Vagina (tissue), 2 donors: ENCODE measurements at regions of chr4 and their contacts with region 1.

Region 1: DNA sequence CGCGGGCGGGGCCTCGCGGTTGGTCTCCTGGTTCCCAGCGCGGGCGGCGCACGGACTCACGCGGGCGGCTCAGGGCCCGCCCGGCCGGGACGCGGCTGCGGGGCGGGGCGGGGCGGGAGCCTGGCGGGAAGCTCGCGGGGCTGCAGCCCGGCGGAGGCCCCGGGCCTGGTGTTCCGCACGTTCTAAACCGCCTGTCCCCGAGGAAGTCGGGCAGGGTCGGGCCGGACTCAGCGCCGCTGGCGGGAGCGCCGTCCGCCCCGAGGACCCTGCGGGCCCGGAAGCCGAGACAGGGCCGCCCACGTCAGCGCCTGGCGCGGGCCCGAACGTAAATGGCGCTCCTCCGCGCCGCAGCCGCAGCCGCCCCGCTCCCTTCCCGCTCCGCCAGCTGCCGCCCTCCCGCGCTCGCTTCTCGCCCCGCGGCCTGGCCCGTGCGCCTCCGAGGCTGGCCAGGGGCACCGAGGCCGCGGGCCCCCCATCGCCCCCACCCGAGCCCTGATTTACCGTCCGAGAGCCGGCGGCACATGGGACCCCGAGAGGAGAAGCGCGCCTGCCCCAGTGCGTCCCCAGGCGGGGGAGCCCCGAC is 309 bp upstream of the CTBP1 start:
- DNase-seq: peak in 1 of 2 donors; percentile 80
- H3K4me3 ChIP-seq: peak overlapping the region; percentile 57 to 92
- H3K27ac ChIP-seq: peak overlapping the region; percentile 93
- H3K4me1 ChIP-seq: peaks cover 67% of the 10 kb centered on the region
- H3K27me3 ChIP-seq: no peaks in the 10 kb centered on the region
- CTCF ChIP-seq: no peak
- POLR2A ChIP-seq: peak in 1 of 2 donors; percentile 44

Region 2: DNA sequence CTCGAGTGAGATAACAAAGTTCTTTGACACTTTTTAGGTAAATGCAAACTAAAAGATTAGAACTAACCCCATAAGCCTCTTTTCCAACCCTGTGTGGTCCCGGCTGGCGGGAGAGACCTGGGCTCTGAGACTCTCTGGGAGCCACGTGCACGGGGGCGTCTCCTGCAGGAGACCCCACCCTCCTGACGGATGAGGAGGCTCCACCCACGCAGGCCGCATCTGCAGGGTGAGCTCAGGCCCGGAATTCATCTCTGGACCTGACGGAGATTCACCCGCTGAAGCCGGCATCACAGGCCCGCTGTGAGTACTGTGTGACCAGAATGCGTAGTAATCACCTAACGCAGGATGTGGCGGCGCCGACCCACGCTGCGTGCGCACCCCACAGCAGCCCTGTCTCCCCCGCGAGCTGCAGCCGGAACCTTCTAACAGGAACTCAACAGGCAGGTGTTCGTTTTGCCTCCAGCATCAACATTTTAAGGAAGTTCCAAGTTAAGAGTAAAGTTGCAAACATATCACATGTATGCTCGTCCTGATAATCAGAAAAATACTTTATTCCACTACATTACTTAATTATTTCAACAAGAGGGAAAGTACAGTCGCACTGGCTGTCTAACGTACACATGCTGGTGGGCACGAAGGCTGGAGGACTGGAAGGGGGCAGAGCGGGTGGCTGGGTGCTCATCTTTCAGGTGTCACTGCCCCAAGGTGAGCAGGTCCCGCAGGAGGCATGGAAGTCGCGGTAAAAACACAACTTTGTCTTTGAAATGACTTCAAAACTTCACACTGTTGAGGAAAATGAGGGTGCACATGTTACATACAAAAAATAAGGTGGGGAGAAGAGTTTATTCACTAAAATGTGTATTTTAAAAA is 193.3 kb before region 1 on chr4:
- intact Hi-C with region 1: no loop called
- DNase-seq: no peak
- H3K4me3 ChIP-seq: no peak overlapping the region
- H3K27ac ChIP-seq: no peak overlapping the region
- H3K4me1 ChIP-seq: peaks cover 5% of the 10 kb centered on the region
- H3K27me3 ChIP-seq: no peaks in the 10 kb centered on the region
- CTCF ChIP-seq: no peak
- POLR2A ChIP-seq: no peak

Region 3: DNA sequence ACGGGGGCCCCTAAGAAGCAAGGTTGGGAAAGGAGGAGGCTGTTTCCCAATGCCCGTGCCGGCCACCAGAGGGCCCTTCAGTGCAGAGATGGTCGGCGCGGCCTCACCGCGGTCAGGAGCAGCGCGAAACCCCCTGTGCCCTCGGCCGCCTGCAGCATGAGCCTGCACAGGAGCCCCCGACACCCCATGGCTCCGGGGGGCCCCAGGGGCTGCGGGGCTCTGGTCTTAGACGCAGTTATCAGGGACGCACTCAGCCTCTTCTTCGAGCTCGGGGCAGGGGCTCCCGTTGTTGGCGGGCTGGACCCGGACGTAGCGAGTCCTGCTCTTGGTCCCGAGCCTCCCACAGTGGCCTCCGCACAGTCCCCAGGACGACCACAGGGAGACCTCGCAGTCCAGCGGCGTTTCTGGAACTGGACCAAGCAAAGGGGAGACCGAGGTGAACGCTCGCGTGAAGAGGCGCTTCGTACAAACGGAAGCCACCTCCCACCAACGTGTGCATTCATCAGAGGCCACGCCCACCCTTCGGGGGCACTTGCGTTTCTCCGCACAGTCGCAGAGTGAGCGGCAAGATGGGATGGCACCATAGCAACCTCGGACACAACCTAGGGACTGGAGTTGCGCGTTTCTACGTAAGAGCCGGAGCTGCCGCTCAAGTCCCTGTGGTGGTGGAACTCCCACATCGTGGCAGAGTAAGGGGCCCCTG is 81.8 kb before region 1 on chr4:
- intact Hi-C with region 1: loop called (anchors 5 kb)
- DNase-seq: peak in 1 of 2 donors; percentile 90
- H3K4me3 ChIP-seq: peak overlapping the region; percentile 47 to 55
- H3K27ac ChIP-seq: peak overlapping the region; percentile 82
- H3K4me1 ChIP-seq: peaks cover 53% of the 10 kb centered on the region
- H3K27me3 ChIP-seq: no peaks in the 10 kb centered on the region
- CTCF ChIP-seq: peak; percentile 79 to 90 (median 89)
- POLR2A ChIP-seq: no peak

Region 4: DNA sequence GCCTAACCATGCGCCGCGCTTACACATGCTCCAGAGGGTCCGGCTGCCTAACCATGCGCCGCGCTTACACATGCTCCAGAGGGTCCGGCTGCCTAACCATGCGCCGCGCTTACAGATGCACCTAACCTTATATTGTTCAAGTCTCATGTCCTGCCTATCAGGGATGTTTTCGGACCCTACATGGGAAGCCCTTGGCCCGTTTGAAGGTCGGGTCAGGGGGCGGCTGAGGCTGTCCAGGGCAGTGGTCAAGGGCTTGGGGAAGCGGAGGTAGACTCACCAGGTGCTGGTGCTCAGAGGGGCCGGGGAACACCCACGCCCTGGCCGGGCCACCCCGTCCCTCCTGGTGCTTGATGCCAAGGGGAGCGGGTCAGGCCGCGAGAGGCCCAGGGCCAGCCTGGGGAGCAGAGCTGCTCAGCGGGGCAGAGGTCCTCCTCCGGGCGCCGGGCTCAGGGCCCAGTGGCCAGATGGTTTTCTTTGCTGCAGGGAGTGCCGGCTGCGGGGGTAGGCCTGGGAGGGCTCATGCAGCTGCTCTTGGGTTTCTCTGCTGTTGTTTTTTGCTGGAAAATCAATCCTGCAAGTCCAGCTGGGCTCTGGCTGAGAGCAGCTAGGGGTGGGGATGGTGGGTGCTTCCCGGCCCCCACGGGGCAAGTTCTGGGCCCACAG is 41.5 kb before region 1 on chr4:
- intact Hi-C with region 1: loop called (anchors 5 kb)
- DNase-seq: no peak
- H3K4me3 ChIP-seq: peak overlapping the region in 1 of 2 donors; percentile 27
- H3K27ac ChIP-seq: peak overlapping the region; percentile 83
- H3K4me1 ChIP-seq: peaks cover 99% of the 10 kb centered on the region
- H3K27me3 ChIP-seq: no peaks in the 10 kb centered on the region
- CTCF ChIP-seq: no peak
- POLR2A ChIP-seq: no peak

Region 5: DNA sequence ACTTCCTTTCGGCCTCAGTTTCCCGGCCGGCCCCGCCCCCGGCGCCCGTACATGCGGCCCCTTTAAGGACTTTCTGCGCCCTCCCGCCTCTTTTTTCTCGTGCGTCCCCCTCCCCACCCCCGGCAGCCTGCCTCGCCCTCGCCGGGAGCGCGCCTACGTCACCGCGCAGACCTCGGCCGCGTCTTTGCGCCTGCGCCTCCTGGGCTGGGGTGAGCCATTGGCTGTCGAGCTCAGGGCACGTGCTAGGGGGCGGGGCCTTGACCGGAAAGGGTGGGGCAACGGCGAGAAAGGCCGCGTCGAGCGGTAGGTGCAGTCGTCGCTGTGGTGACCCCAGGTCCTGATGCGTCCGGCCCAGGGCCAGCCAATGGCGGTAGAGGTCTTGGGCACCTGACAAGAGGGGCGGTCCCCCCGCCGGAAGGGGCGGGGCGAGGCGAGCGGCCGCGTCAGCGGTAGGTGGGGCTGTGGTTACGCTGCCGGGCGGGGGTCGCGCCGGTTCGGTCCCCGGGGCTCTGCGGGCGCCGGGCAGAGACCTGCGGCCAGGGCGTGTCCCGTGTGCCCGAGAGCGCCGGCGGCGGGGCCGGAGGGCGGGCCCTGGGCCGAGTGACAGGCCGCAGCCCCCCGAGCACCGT is 97.7 kb after region 1 on chr4 and contains the start of gene UVSSA:
- intact Hi-C with region 1: loop called (anchors 1 kb)
- DNase-seq: peak; percentile 100
- H3K4me3 ChIP-seq: peak within 1 kb of the TSS; percentile 76 to 96
- H3K27ac ChIP-seq: peak within 1 kb of the TSS; percentile 94
- H3K4me1 ChIP-seq: peaks cover 40% of the 10 kb centered on the region
- H3K27me3 ChIP-seq: no peaks in the 10 kb centered on the region
- CTCF ChIP-seq: peak in 1 of 3 experiments; percentile 1
- POLR2A ChIP-seq: peak in 1 of 2 donors; percentile 96
- total RNA-seq, gene UVSSA: 25.5 TPM